ENCODE measurements at regions of chr21 and their contacts with region 1.

Region 1: GRCh38 chr21:34129039-34129891 is 55.9 kb downstream of the MRPS6 start:
- DNase-seq: peak; percentile 85
- H3K4me3 ChIP-seq: peak overlapping the region in 3 of 4 donors; percentile 15 to 31 (median 16)
- H3K27ac ChIP-seq: peak overlapping the region; percentile 80 to 89 (median 82)
- H3K4me1 ChIP-seq: peaks cover 0 to 88% (median 85%) of the 10 kb centered on the region in 4 donors
- H3K27me3 ChIP-seq: no peaks in the 10 kb centered on the region
- CTCF ChIP-seq: peak in 3 of 4 experiments; percentile 13 to 36 (median 22)
- EP300 ChIP-seq: peak in 1 of 4 donors; percentile 34
- POLR2A ChIP-seq: no peak

Region 2: DNA sequence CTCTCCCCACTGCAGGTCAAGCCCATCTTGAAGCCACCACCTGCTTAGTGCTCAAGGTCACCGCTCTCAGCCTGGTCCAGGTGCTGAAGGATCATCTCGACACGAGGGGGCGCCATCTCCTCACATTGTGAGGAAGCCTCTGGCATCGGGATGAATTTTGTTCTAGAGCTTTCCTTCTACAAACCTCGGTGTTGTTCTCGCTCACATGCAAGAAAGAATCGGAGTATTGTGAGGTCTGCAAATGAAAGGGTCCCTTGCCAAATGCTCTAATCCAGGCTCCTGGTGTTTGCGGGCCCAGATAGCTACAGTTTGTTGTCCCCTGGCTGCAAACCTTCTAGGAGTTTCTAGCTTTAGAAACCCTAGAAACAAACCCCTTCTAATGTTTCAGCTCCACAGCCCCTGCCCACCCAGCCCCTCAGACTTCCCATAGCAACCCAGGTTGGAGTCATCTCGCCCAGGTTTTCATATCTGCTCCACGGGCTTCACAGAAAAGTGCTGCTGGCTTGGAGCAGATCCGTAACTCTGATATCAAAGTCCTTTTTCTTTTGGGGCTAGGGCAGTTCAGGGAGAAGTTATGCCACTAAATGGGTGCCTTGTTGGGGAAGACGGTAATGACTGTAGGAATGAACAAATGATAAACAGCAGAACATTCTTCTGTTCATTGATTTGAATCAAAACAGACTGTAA is 205.0 kb before region 1 on chr21:
- intact Hi-C with region 1: loop called (anchors 5 kb)
- DNase-seq: peak; percentile 93
- H3K4me3 ChIP-seq: no peak overlapping the region
- H3K27ac ChIP-seq: peak overlapping the region in 3 of 4 donors; percentile 64 to 78 (median 68)
- H3K4me1 ChIP-seq: peaks cover 0 to 13% (median 11%) of the 10 kb centered on the region in 4 donors
- H3K27me3 ChIP-seq: no peaks in the 10 kb centered on the region
- CTCF ChIP-seq: peak; percentile 87 to 96 (median 94)
- EP300 ChIP-seq: no peak
- POLR2A ChIP-seq: no peak

Region 3: DNA sequence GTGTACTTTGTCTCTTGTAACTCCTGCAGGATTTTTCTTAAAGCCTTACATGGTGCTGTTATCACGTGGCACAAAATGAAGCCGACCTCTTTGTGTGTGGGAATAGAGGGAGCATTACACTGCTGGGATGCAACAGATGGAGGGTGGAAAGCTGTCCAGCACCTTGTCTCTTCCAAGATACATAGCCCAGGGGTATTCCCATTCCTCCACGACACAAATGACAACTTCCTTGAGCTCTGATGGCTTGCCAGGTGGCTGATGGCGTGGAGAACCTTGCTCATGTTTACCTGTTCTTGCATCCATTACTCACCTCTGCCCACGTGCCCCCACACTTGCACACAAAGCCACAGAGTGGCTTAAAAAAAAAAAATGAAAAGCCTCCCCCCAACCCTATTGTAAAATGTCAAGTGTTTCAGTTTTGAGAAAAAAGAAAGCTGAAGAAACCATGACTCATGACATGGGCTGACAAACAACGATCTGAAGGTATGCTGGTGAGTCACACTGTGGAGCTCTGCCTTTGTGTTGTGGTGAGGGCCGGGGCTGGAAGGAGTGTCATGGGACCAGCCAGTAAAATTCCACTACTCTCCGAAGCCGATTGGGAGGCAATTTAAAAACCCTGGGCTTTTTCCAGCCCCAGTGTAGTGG is 181.7 kb before region 1 on chr21:
- intact Hi-C with region 1: loop called (anchors 5 kb)
- DNase-seq: peak; percentile 96
- H3K4me3 ChIP-seq: peak overlapping the region in 3 of 4 donors; percentile 19 to 26 (median 21)
- H3K27ac ChIP-seq: peak overlapping the region; percentile 82 to 94 (median 88)
- H3K4me1 ChIP-seq: peaks cover 0 to 33% (median 31%) of the 10 kb centered on the region in 4 donors
- H3K27me3 ChIP-seq: no peaks in the 10 kb centered on the region
- CTCF ChIP-seq: no peak
- EP300 ChIP-seq: peak in 2 of 4 donors; percentile 12 to 92
- POLR2A ChIP-seq: no peak

Region 4: DNA sequence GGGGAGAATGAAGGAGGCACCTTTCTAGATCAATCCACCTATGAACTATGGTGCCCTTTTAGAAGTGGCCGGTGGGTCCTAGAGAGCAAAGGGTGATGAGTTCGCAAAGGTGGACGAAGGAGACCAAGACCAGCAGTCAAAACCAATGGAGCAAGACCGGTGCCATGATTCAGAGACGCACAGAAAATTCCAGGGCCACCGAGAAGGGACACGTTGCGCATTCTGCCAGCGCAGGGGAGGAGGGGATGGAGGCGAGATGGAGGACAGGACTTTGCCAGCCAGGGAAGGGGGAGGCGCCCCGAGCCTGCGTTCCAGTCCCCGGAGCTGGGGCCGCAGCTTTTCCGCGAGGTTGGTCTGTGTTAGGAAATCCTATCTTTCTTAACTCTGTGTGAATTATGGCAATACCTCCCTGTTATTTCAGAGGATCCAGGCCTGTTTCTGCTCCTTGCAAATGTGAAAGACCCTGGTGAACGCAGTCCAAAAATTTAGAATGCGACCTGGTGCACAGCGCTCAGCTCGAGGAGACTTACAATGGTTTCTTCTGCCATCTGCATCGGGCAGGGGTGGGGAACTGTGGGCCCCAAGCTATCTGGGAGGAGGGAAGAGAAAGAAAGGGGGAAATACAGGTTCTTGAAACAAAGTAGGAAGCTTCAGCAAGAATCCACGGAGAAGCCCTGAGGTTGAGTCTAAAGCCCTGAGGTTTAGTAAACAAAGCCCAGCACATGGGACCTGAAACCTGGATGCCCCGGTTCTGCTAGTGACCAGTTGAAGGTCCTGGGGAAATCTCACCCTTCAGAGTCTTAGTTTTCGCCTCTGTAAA is 73.5 kb after region 1 on chr21:
- intact Hi-C with region 1: loop called (anchors 1 kb)
- DNase-seq: peak; percentile 84
- H3K4me3 ChIP-seq: peak overlapping the region in 3 of 4 donors; percentile 46 to 54 (median 49)
- H3K27ac ChIP-seq: peak overlapping the region; percentile 71 to 87 (median 84)
- H3K4me1 ChIP-seq: peaks cover 0 to 74% (median 67%) of the 10 kb centered on the region in 4 donors
- H3K27me3 ChIP-seq: no peaks in the 10 kb centered on the region
- CTCF ChIP-seq: no peak
- EP300 ChIP-seq: no peak
- POLR2A ChIP-seq: no peak

Region 5: GRCh38 chr21:34345091-34345871 is 216.0 kb after region 1 on chr21:
- intact Hi-C with region 1: loop called (anchors 2 kb)
- DNase-seq: no peak
- H3K4me3 ChIP-seq: no peak overlapping the region
- H3K27ac ChIP-seq: peak overlapping the region; percentile 53 to 78 (median 60)
- H3K4me1 ChIP-seq: peaks cover 0 to 57% (median 42%) of the 10 kb centered on the region in 4 donors
- H3K27me3 ChIP-seq: no peaks in the 10 kb centered on the region
- CTCF ChIP-seq: no peak
- EP300 ChIP-seq: no peak
- POLR2A ChIP-seq: no peak

Measured in sigmoid colon (tissue), 7 donors.